ENCODE measurements at regions of chr7 and their contacts with region 1.

Region 1: GRCh38 chr7:129218514-129219062 is 6.2 kb upstream of the AHCYL2 start:
- DNase-seq: no peak
- ATAC-seq: peak; percentile 96
- H3K4me3 ChIP-seq: no peak overlapping the region
- H3K27ac ChIP-seq: no peak overlapping the region
- H3K4me1 ChIP-seq: no peaks in the 10 kb centered on the region
- H3K27me3 ChIP-seq: no peaks in the 10 kb centered on the region
- CTCF ChIP-seq: peak; percentile 84 to 93 (median 84)
- EP300 ChIP-seq: no peak
- POLR2A ChIP-seq: no peak
- RAD21 ChIP-seq: peak; percentile 94

Region 2: GRCh38 chr7:129163875-129164544 is 54.6 kb before region 1 on chr7:
- CTCF ChIA-PET with region 1: interaction called, 109 read pairs
- POLR2A ChIA-PET with region 1: no interaction called
- RAD21 ChIA-PET with region 1: interaction called, 67 read pairs
- SMC1A ChIA-PET with region 1: interaction called, 7 read pairs
- in situ Hi-C with region 1: no loop called
- intact Hi-C with region 1: no loop called
- DNase-seq: no peak
- ATAC-seq: peak; percentile 40
- H3K4me3 ChIP-seq: no peak overlapping the region
- H3K27ac ChIP-seq: no peak overlapping the region
- H3K4me1 ChIP-seq: peaks cover 57% of the 10 kb centered on the region
- H3K27me3 ChIP-seq: no peaks in the 10 kb centered on the region
- CTCF ChIP-seq: peak; percentile 61 to 78 (median 64)
- EP300 ChIP-seq: no peak
- POLR2A ChIP-seq: no peak
- RAD21 ChIP-seq: peak; percentile 60; the same call in 1 of the 2 replicates

Region 3: DNA sequence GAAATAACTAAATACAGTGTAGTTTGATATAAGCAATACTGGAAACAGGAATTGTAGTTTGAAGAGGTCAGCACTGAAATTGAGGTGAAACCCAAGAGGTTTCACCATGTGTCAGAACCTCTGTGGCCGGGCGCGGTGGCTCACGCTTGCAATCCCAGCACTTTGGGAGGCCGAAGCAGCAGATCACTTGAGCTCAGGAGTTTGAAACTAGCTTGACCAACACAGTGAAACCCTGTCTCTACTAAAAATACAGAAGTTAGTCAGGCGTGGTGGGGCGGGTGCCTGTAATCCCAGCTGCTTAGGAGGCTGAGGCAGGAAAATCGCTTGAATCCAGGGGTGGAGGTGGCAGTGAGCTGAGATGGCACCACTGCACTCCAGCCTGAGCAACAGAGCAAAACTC is 20.0 kb after region 1 on chr7:
- CTCF ChIA-PET with region 1: interaction called, 55 read pairs
- POLR2A ChIA-PET with region 1: interaction called, 3 read pairs
- RAD21 ChIA-PET with region 1: interaction called, 3 read pairs
- SMC1A ChIA-PET with region 1: interaction called, 7 read pairs
- in situ Hi-C with region 1: no loop called
- intact Hi-C with region 1: no loop called
- DNase-seq: no peak
- ATAC-seq: peak; percentile 77
- H3K4me3 ChIP-seq: peak overlapping the region; percentile 42
- H3K27ac ChIP-seq: no peak overlapping the region
- H3K4me1 ChIP-seq: peaks cover 13% of the 10 kb centered on the region
- H3K27me3 ChIP-seq: no peaks in the 10 kb centered on the region
- CTCF ChIP-seq: no peak
- EP300 ChIP-seq: no peak
- POLR2A ChIP-seq: no peak
- RAD21 ChIP-seq: no peak

Region 4: DNA sequence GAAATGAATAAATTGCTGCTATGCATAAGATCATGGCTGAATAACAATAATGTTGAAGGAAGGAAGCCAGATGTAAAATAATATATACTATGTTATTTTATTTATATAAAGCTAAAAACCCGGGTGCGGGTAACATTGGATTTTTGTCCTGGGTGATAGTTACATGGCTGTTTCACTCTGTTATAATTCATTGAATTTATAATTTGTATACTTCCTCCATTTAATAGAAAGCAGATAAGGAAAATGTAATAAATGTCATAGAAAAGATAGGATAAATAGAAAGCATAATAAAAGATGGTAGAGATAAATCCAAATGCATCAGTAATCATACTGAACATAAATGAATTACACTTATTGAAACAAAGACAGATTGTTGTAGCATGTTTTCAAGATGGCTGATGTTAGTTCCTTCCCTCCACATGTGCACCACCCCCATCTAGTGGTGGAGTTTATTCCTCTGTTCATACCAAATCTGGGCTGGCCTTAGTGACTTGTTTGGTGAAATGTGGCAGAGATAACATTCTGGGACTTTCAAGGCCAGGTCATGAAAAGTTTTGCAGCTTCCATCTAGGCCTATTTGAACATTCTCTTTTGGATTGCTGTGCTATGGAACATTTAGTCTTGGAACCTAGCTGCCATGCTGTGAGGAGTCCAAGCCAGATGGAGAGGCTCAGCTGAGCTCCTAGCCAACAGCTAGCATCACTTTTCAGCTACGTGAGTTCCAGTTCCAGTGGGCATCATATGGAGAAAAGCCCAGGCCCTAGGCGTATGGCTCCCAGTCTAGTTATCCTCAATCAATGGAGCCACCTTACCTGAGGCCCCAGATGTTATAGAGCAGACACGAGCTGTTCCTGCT is 53.1 kb after region 1 on chr7:
- CTCF ChIA-PET with region 1: interaction called, 170 read pairs
- POLR2A ChIA-PET with region 1: interaction called, 5 read pairs
- RAD21 ChIA-PET with region 1: interaction called, 42 read pairs
- SMC1A ChIA-PET with region 1: interaction called, 45 read pairs
- in situ Hi-C with region 1: no loop called
- intact Hi-C with region 1: loop called (anchors 1 kb)
- DNase-seq: peak; percentile 21
- ATAC-seq: peak; percentile 98
- H3K4me3 ChIP-seq: no peak overlapping the region
- H3K27ac ChIP-seq: no peak overlapping the region
- H3K4me1 ChIP-seq: peaks cover 6% of the 10 kb centered on the region; the same call in 1 of the 2 replicates
- H3K27me3 ChIP-seq: no peaks in the 10 kb centered on the region
- CTCF ChIP-seq: peak; percentile 73 to 83 (median 74)
- EP300 ChIP-seq: no peak
- POLR2A ChIP-seq: no peak
- RAD21 ChIP-seq: peak; percentile 85

Region 5: DNA sequence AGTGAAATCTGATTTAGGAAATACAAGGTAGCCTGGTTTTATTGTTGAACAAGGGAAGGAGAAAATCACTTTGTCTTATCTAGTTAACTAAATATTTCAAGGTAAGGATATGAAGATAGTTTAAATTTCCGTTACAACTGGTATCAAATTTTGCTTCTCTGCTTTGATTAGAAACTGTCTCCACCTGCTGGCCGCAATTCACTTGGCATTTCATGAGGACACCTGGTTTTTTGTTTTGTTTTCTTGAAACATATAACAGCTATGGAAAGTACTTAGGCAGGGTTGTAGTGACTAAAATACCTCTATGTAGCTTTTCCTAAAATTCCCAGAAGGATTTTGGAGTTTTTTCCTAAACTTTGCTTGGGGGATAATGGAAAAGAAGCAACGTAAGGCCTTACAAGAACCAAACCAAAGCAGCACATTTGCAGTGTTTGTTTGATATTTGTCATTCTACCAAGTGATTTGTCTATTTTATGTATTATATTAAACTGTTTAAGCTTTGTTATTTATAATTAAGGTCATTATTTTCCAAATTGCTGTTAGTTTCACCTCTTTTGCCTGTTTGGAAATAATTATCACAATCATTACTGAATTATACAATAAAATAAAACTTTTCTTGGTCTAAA is 79.8 kb after region 1 on chr7:
- CTCF ChIA-PET with region 1: interaction called, 185 read pairs
- POLR2A ChIA-PET with region 1: no interaction called
- RAD21 ChIA-PET with region 1: interaction called, 68 read pairs
- SMC1A ChIA-PET with region 1: interaction called, 103 read pairs
- in situ Hi-C with region 1: loop called (anchors 5 kb)
- intact Hi-C with region 1: loop called (anchors 1 kb)
- DNase-seq: no peak
- ATAC-seq: peak; percentile 48; the same call in 2 of the 3 replicates
- H3K4me3 ChIP-seq: no peak overlapping the region
- H3K27ac ChIP-seq: no peak overlapping the region
- H3K4me1 ChIP-seq: no peaks in the 10 kb centered on the region
- H3K27me3 ChIP-seq: no peaks in the 10 kb centered on the region
- CTCF ChIP-seq: peak; percentile 71 to 76 (median 76)
- EP300 ChIP-seq: no peak
- POLR2A ChIP-seq: no peak
- RAD21 ChIP-seq: peak; percentile 78

Region 6: DNA sequence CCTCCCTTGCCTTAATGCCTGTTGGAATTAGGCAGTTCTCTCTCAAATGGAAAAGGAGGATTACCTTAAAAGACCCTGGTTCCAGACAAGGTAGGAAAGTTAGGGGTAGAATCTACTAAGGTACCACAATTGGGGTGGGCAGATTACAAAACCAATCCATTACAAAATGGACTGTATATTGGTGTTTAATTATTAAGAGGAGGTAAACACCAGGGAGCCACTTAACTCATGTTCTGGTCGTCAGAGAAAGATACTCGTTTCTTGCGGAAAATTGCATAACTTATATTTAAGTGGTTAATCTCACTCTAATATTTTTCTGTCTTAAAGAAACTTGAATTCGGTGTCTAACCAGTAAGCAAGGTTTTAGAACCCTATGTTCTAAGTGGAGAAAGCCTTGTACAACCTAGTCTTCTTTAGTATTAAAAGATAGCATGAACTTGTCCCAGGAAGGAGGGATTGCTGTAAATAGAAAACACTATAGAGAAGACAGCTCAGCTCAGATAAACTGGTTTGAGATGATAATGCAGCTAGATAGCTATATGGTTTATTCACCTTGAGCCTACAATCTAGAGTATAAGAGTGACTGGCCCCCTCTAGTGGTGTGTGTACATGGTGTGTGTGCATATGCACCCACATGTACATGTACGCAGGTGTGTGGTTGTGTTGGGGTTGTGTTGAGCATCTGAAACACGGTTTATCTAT is 157.6 kb after region 1 on chr7:
- CTCF ChIA-PET with region 1: interaction called, 31 read pairs
- POLR2A ChIA-PET with region 1: no interaction called
- RAD21 ChIA-PET with region 1: interaction called, 44 read pairs
- SMC1A ChIA-PET with region 1: interaction called, 109 read pairs
- in situ Hi-C with region 1: no loop called
- intact Hi-C with region 1: no loop called
- DNase-seq: no peak
- ATAC-seq: peak; percentile 98
- H3K4me3 ChIP-seq: no peak overlapping the region
- H3K27ac ChIP-seq: no peak overlapping the region
- H3K4me1 ChIP-seq: peaks cover 8% of the 10 kb centered on the region; the same call in 1 of the 2 replicates
- H3K27me3 ChIP-seq: no peaks in the 10 kb centered on the region
- CTCF ChIP-seq: peak; percentile 74 to 81 (median 77)
- EP300 ChIP-seq: no peak
- POLR2A ChIP-seq: no peak
- RAD21 ChIP-seq: peak; percentile 52

Region 7: GRCh38 chr7:129439963-129440625 is 221.5 kb after region 1 on chr7:
- CTCF ChIA-PET with region 1: no interaction called
- POLR2A ChIA-PET with region 1: no interaction called
- RAD21 ChIA-PET with region 1: no interaction called
- SMC1A ChIA-PET with region 1: no interaction called
- in situ Hi-C with region 1: no loop called
- intact Hi-C with region 1: no loop called
- DNase-seq: no peak
- ATAC-seq: no peak
- H3K4me3 ChIP-seq: no peak overlapping the region
- H3K27ac ChIP-seq: no peak overlapping the region
- H3K4me1 ChIP-seq: no peaks in the 10 kb centered on the region
- H3K27me3 ChIP-seq: no peaks in the 10 kb centered on the region
- CTCF ChIP-seq: no peak
- EP300 ChIP-seq: no peak
- POLR2A ChIP-seq: no peak
- RAD21 ChIP-seq: no peak

Region 8: DNA sequence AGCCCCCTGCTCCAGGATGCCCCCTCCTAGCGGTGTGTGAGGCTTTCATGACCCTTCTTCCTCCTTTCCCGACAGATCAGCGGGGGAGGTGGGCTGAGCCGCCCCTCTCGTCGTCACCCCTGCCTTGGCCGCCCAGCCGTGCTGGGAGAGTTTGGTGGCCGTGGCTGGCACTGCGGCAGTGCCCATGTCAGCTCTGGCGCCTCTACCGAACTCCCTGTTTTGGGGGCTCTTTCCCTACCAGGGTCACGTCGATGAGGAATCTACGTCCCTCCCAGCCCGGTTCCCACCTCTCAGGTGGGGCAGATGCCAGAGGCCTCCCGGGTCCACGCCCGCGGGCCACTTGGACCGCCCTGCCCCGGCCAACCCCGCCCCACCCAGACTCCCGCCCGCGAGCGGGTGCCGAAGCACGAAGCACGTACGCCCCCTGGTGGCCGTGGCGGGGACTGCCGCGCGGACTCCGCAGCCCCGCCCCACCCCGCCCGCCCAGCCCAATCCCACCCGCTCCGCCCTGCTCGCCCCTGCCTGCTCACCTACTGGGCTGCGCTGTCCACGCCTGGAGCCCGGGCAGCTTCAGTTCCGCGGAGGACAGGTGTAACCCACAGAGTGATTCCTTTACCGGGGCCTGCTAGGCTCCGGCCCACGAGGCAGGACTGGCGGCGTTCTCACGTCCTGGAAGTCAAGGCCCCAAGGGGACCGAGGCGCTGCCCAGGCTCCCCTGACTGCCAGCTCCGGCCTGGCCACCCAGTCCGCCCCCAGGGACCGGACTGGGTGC is 607.1 kb after region 1 on chr7:
- CTCF ChIA-PET with region 1: interaction called, 10 read pairs
- POLR2A ChIA-PET with region 1: no interaction called
- RAD21 ChIA-PET with region 1: interaction called, 3 read pairs
- SMC1A ChIA-PET with region 1: interaction called, 3 read pairs
- in situ Hi-C with region 1: no loop called
- intact Hi-C with region 1: no loop called
- DNase-seq: no peak
- ATAC-seq: peak; percentile 88
- H3K4me3 ChIP-seq: peak overlapping the region; percentile 79
- H3K27ac ChIP-seq: no peak overlapping the region
- H3K4me1 ChIP-seq: peaks cover 4% of the 10 kb centered on the region
- H3K27me3 ChIP-seq: no peaks in the 10 kb centered on the region
- CTCF ChIP-seq: peak; percentile 37 to 72 (median 70); a peak in 4 of 6 replicates
- EP300 ChIP-seq: no peak
- POLR2A ChIP-seq: peak; percentile 61; the same call in 1 of the 2 replicates
- RAD21 ChIP-seq: peak; percentile 77

Measured in GM12878 (cell line).